HCT116 (cell line): ENCODE measurements at regions of chr5 and their contacts with region 1.

Region 1: DNA sequence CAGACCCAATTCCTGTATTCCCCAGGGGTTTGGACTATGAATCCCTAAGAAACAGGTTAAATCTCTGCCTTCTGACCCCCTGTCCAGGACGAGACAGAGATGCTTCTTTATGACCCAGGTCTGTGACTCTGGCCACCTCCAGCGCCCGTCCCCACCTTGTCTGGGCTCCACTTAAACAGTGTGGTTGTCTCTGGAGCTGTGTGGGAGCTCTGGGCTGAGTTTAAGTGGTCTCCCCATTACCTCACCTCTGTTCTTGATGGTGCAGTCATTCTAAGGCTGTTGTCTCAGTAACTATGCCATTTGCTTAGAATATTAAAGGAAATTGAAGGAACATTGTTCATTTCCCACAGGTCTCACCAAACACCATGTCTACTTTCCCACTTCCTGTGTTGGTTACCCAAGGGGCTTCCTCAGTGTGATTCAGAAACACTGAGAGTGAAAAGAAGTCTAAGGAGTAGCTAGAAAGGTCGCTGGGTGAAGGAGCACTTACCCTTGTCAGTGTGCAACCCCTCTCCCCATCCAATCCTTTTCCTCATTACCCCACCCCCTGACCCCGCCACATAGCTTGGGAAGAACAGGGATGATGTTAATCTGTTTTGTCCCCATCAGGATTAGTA is 127.8 kb upstream of the CKMT2 start:
- DNase-seq: no peak
- ATAC-seq: no peak
- H3K4me3 ChIP-seq: no peak overlapping the region
- H3K27ac ChIP-seq: no peak overlapping the region
- H3K4me1 ChIP-seq: no peaks in the 10 kb centered on the region
- H3K27me3 ChIP-seq: no peaks in the 10 kb centered on the region
- CTCF ChIP-seq: no peak
- POLR2A ChIP-seq: no peak
- RAD21 ChIP-seq: no peak

Region 2: DNA sequence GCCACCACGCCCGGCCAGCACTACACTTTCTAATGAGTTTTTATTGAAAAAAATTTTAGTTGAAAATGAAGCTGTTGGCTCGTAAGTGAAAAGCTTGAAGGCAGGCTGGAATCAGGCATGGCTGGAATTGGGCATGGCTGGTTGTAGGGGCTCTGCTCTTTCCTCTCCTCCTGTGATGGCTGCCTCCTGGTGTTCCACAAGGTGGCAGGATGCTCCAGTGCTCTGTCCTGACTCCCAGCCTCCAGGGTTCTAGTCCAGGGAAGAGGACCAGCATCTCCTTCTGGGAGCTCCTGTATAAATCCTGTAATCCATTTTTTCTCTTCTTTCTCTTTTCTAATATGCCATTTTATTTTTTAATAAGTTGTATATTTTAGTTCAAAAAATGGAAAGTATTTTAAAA is 393.4 kb before region 1 on chr5:
- CTCF ChIA-PET with region 1: interaction called, 12 read pairs
- POLR2A ChIA-PET with region 1: no interaction called
- RAD21 ChIA-PET with region 1: interaction called, 6 to 10 read pairs
- intact Hi-C with region 1: loop called (anchors 1 kb)
- DNase-seq: peak; percentile 19
- ATAC-seq: peak; percentile 99
- H3K4me3 ChIP-seq: no peak overlapping the region
- H3K27ac ChIP-seq: no peak overlapping the region
- H3K4me1 ChIP-seq: no peaks in the 10 kb centered on the region
- H3K27me3 ChIP-seq: no peaks in the 10 kb centered on the region
- CTCF ChIP-seq: peak; percentile 59 to 77 (median 62); a peak in 5 of 6 replicates
- POLR2A ChIP-seq: no peak
- RAD21 ChIP-seq: peak; percentile 78

Region 3: GRCh38 chr5:81121836-81122630 is 16.7 kb after region 1 on chr5:
- CTCF ChIA-PET with region 1: interaction called, 10 read pairs
- POLR2A ChIA-PET with region 1: no interaction called
- RAD21 ChIA-PET with region 1: no interaction called
- intact Hi-C with region 1: no loop called
- DNase-seq: no peak
- ATAC-seq: no peak
- H3K4me3 ChIP-seq: no peak overlapping the region
- H3K27ac ChIP-seq: no peak overlapping the region
- H3K4me1 ChIP-seq: no peaks in the 10 kb centered on the region
- H3K27me3 ChIP-seq: no peaks in the 10 kb centered on the region
- CTCF ChIP-seq: no peak
- POLR2A ChIP-seq: no peak
- RAD21 ChIP-seq: no peak

Region 4: DNA sequence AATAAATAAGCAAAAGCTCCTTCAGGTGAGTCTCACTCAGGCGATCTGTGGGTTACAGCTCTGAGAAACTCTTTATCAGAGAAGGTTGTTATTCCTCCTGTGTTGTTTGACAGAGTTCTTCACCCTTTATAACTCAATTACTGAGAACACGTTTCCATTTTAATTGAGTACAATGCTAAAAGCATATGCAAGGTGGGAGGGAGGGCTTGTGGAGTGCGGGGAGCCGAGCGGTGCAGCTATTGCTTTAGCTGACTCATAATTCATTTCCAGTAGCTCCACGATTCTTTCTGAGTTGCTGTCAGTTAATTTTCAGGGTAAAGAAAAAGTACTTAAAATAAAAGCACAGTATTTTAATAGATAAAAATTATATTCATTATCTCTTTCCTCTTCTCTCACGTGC is 23.0 kb after region 1 on chr5:
- CTCF ChIA-PET with region 1: interaction called, 10 read pairs
- POLR2A ChIA-PET with region 1: no interaction called
- RAD21 ChIA-PET with region 1: no interaction called
- intact Hi-C with region 1: no loop called
- DNase-seq: no peak
- ATAC-seq: no peak
- H3K4me3 ChIP-seq: no peak overlapping the region
- H3K27ac ChIP-seq: no peak overlapping the region
- H3K4me1 ChIP-seq: no peaks in the 10 kb centered on the region
- H3K27me3 ChIP-seq: no peaks in the 10 kb centered on the region
- CTCF ChIP-seq: no peak
- POLR2A ChIP-seq: no peak
- RAD21 ChIP-seq: no peak